ENCODE measurements at regions of chr3 and their contacts with region 1.

Region 1: GRCh38 chr3:52154117-52155094 is at the start of gene POC1A:
- DNase-seq: peak; percentile 97 to 99
- ATAC-seq: peak; percentile 99
- H3K4me3 ChIP-seq: peak within 1 kb of the TSS; percentile 65 to 87 (median 82)
- H3K27ac ChIP-seq: peak within 1 kb of the TSS; percentile 84 to 97 (median 96)
- H3K4me1 ChIP-seq: peaks cover 8 to 10% of the 10 kb centered on the region in 2 donors
- H3K27me3 ChIP-seq: no peaks in the 10 kb centered on the region
- CTCF ChIP-seq: peak in 4 of 5 experiments; percentile 30 to 46 (median 40)
- POLR2A ChIP-seq: peak; percentile 61 to 87
- total RNA-seq, gene POC1A: 0.51 to 3.2 (median 0.81) TPM

Region 2: DNA sequence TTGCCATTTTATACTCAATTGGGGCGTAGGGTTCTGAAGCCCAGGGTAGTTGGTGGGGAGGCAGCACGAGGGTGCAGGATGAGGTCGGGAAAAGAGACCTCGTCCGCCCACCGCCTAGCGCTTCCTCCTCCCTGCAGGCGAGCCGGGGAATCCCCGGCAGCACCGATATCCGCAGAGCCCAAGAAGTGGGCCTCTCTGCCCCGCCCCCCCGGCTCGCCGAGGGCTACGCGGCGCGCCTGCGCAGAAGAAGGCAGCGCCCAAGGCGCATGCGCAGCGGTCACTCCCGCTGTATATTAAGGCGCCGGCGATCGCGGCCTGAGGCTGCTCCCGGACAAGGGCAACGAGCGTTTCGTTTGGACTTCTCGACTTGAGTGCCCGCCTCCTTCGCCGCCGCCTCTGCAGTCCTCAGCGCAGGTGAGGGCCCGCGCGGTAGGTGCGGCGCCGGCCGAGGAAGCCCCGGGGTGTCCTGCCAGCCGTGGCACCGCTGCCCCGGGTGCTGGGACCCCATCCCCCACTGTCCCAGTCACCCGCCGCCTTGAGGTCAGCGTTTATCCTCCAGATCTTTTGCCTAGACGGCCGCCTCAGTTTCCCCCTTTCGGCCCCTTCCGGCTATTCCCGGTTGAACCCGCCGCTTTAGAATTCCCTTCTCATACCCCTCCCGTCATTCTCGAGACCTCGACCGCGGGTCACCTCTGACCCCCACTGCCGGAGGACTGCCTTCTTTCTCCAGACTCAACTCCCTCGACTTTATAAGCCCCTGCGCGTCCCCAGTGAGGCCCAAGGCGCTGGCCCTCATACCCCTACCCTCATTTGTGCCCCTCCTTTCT is 43.6 kb after region 1 on chr3 and contains the start of gene ALAS1:
- in situ Hi-C with region 1: no loop called
- intact Hi-C with region 1: loop called (anchors 2 kb)
- DNase-seq: peak; percentile 75 to 90
- ATAC-seq: peak; percentile 89 to 92
- H3K4me3 ChIP-seq: peak within 1 kb of the TSS; percentile 83 to 100 (median 86)
- H3K27ac ChIP-seq: peak within 1 kb of the TSS; percentile 88 to 97 (median 92)
- H3K4me1 ChIP-seq: peaks cover 30 to 34% of the 10 kb centered on the region in 2 donors
- H3K27me3 ChIP-seq: no peaks in the 10 kb centered on the region
- CTCF ChIP-seq: peak in 3 of 5 experiments; percentile 22 to 42 (median 25)
- POLR2A ChIP-seq: peak; percentile 85 to 96
- total RNA-seq, gene ALAS1: 61.0 to 99.8 (median 68.4) TPM

Measured in gastrocnemius medialis (tissue), 4 donors.